SK-N-SH (cell line): ENCODE measurements at regions of chr4 and their contacts with region 1.

Region 1: DNA sequence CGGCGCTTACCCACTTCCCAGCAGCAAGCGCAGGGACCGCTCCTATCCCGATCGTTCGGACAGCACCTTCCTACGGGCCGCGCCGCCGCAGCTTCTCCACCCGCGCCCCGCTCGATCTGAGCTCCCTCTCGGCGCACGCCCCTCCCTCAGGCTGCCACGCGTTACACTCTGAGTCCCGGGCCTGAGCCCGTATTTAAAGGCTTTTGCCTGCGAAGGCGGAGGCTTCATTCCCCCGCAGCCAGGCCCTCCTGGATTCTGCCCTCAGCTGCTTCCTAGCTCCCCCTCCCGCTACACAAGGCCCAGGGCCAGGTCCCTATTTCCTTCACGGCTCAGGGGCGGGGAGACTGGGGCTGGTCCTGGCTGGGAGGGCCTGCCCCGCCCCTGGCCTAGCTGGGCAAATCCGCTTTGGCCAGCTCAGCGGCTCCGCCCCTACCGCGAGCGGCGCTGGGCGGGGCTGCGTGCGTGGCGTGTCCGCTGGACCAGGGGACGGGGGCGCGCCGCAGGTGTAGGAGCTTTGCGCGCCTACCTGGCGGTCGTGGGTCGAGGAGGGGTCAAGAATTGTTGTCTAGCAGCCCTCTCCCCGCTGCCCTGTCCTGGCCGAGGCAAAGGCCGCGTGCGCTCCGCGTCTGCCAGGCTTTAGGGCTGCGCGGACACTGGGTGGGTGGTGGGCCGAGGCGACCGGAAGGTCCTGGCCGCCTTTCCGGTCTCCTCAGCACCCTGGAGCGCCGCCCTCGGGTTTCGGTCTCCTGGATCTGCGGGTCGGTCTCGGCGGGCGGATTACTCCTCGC is at the start of gene UGDH:
- DNase-seq: peak; percentile 98
- H3K4me3 ChIP-seq: peak within 1 kb of the TSS; percentile 84 to 89
- H3K27ac ChIP-seq: peak within 1 kb of the TSS; percentile 92 to 96
- H3K4me1 ChIP-seq: peaks cover 3 to 6% of the 10 kb centered on the region in 2 experiments; a peak in 2 of 4 replicates
- H3K27me3 ChIP-seq: no peaks in the 10 kb centered on the region
- CTCF ChIP-seq: peak; percentile 11; the same call in 1 of the 2 replicates
- EP300 ChIP-seq: no peak; a peak in 1 of 4 replicates
- RAD21 ChIP-seq: no peak
- polyA plus RNA-seq, gene UGDH: 41.4 and 41.6 TPM in 2 replicates

Region 2: DNA sequence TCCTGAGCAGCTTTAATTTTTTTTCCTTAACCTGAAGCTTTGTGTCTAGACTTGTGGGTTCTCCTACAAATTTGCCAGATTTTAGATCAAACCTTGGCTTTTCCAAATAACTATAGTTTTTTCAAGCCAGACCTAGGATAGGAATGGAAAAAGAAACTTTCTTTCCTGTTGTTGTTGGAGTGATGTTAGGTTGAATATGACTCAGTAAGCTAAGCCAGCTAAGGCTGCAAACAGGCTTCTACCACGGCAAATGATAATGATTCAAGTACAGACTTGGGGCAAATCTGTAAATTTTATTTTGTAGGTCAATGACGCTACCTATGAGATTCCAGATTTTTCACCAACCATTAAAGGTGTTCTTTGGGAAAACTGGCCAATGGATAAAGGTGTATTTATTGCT is 299.6 kb before region 1 on chr4:
- CTCF ChIA-PET with region 1: no interaction called
- POLR2A ChIA-PET with region 1: no interaction called
- DNase-seq: no peak
- H3K4me3 ChIP-seq: no peak overlapping the region
- H3K27ac ChIP-seq: no peak overlapping the region
- H3K4me1 ChIP-seq: no peaks in the 10 kb centered on the region
- H3K27me3 ChIP-seq: no peaks in the 10 kb centered on the region
- CTCF ChIP-seq: no peak
- EP300 ChIP-seq: no peak
- RAD21 ChIP-seq: no peak

Region 3: GRCh38 chr4:39365830-39366771 is 161.4 kb before region 1 on chr4 and contains the start of gene RFC1:
- CTCF ChIA-PET with region 1: no interaction called
- POLR2A ChIA-PET with region 1: no interaction called
- DNase-seq: peak; percentile 87
- H3K4me3 ChIP-seq: peak within 1 kb of the TSS; percentile 91 to 95
- H3K27ac ChIP-seq: peak within 1 kb of the TSS; percentile 59 to 78
- H3K4me1 ChIP-seq: peaks cover 0 to 12% of the 10 kb centered on the region in 2 experiments; a peak in 2 of 4 replicates
- H3K27me3 ChIP-seq: no peaks in the 10 kb centered on the region
- CTCF ChIP-seq: no peak
- EP300 ChIP-seq: peak in 1 of 2 experiments; percentile 25; a peak in 1 of 4 replicates
- RAD21 ChIP-seq: no peak
- polyA plus RNA-seq, gene RFC1: 14.9 and 19.2 TPM in 2 replicates

Region 4: DNA sequence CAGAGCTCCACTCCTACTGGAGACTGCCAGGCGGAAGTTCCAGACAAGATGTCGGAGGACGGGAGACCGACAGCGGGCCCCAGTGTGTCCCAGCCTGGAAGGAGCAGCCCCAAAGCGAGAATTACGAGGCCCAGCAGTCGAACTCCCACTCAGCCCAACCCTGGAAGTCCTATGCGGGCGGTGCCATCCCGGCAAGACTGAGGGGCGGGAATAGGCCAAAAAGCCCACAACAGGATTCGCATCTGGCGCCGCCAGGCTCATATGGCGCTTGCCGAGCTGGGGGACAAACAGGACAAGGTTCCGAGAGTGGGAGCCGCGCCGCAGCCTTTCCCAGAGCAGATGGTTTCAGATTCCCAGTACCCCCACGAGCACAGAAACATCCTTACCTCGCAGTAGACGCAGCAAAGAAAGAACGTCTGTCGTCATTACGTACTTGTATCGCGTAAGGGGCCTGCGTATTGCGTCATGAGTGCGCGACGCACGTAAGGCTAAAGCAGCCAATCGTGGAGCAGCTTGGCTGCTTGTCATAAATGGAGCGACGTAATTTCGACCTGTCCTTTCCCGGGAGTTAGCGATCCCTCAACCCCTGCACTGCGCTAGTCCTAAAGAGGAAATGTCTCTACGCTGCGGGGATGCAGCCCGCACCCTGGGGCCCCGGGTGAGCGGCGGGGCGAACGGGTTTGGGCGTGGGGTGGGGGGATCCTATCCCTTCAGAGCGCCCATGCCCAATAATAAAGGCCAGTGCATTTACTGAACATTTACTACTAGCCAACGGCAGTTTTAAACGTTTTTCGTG is 68.8 kb before region 1 on chr4 and contains the starts of genes LIAS and RPL9:
- CTCF ChIA-PET with region 1: interaction called, 3 read pairs
- POLR2A ChIA-PET with region 1: interaction called, 10 read pairs
- DNase-seq: peak; percentile 94
- H3K4me3 ChIP-seq: peak within 1 kb of the TSS; percentile 97 to 99
- H3K27ac ChIP-seq: peak within 1 kb of the TSS; percentile 84 to 96
- H3K4me1 ChIP-seq: peaks cover 11 to 12% of the 10 kb centered on the region in 2 experiments; a peak in 3 of 4 replicates
- H3K27me3 ChIP-seq: no peaks in the 10 kb centered on the region
- CTCF ChIP-seq: no peak
- EP300 ChIP-seq: no peak
- RAD21 ChIP-seq: no peak
- polyA plus RNA-seq, gene LIAS: 9.2 and 10.8 TPM in 2 replicates
- polyA plus RNA-seq, gene RPL9: 1,564 and 2,425 TPM in 2 replicates

Region 5: DNA sequence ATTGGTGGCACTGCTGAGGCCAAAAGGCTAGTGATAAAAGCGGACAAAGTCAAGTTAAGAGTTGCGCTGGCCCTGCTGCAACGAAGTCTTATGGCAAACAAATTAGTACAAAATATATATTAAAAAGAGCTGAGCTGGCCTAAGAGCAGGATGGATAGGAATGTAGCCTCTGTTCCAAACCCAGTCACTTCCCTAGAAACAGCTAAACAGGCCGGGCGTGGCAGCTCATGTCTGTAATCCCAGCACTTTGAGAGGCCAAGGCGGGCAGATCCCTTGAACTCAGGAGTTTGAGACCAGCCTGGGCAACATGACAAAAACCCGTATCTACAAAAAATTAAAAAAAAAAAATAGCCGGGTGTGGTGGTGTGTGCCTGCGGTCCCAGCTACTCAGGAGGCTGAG is 32.2 kb after region 1 on chr4:
- CTCF ChIA-PET with region 1: no interaction called
- POLR2A ChIA-PET with region 1: interaction called, 13 read pairs
- DNase-seq: no peak
- H3K4me3 ChIP-seq: no peak overlapping the region
- H3K27ac ChIP-seq: no peak overlapping the region
- H3K4me1 ChIP-seq: no peaks in the 10 kb centered on the region
- H3K27me3 ChIP-seq: no peaks in the 10 kb centered on the region
- CTCF ChIP-seq: no peak
- EP300 ChIP-seq: no peak
- RAD21 ChIP-seq: no peak

Region 6: DNA sequence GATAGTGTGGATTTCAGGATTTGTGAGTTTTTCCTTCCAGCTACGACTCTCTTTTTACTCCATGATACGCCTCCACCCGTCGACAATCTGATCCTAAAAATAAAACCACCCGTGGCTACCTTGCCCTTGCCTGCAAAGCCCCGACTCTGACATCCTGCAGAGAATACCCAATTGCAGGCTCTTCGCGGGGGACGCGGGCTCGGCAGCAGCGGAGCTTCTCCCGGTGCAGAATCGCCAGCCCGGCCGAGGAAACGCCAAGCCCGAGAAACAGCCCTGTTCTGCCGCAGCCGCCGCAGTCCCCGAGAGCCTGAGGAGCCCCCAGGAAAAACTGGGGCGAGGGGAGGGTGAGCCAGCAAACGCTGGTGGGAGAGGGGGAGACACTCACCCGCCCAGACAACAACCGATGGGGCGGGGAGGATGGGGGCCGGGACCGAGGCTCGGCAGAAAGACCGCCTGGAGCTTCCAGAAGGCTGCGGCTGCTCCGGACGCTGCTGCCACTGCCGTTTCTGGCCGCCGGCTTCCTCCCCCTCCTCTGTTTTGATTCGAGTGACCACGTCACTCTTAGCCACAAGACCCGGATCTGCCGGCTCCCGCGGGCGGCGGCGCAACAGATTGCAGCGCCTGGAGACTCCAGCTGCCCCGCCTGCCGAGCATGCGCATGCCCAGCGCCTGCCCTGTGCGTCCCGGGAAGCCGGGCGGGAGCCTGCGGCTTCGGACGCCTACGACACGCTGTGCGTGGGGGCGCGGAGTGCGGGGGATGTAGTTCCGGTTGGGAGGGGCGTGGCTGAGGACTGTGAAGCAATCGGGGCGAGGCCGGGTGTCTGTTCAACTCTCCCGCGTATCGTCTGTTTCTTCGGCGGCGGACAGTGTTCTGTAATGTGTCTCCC is 111.1 kb after region 1 on chr4 and contains the start of gene SMIM14:
- CTCF ChIA-PET with region 1: no interaction called
- POLR2A ChIA-PET with region 1: interaction called, 40 read pairs
- DNase-seq: peak; percentile 98
- H3K4me3 ChIP-seq: peak within 1 kb of the TSS; percentile 85
- H3K27ac ChIP-seq: peak within 1 kb of the TSS; percentile 91 to 99
- H3K4me1 ChIP-seq: peaks cover 5 to 6% of the 10 kb centered on the region in 2 experiments; a peak in 3 of 4 replicates
- H3K27me3 ChIP-seq: no peaks in the 10 kb centered on the region
- CTCF ChIP-seq: no peak
- EP300 ChIP-seq: peak; percentile 7 to 42; a peak in 2 of 4 replicates
- RAD21 ChIP-seq: no peak
- polyA plus RNA-seq, gene SMIM14: 11.1 and 12.6 TPM in 2 replicates